ENCODE measurements at regions of chr14 and their contacts with region 1.

Region 1: DNA sequence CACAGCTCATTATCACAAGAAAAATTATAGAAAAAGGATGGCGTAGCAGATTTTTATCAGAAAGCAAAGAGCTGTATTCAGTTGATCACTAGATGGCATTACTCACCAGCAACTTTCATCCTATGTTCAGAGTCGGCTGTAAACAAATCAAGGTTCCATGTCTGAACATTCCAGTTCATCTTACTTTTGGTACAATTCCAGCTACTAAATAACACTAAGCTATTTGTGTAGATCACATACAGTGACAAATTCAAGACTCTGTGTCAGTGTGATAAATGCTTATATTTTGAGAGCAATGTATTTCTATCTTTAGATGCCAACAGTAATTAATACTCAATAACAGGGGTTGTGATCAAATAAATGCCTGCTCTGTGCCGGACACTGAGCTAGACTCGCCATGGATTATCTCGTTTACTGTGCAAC is 30.1 kb downstream of the NRDE2 start:
- DNase-seq: no peak
- H3K4me3 ChIP-seq: no peak overlapping the region
- H3K27ac ChIP-seq: peak overlapping the region; percentile 54 to 77 (median 74)
- H3K4me1 ChIP-seq: peaks cover 10 to 35% (median 32%) of the 10 kb centered on the region in 4 donors
- H3K27me3 ChIP-seq: no peaks in the 10 kb centered on the region
- CTCF ChIP-seq: peak; percentile 67 to 68 (median 67)
- EP300 ChIP-seq: no peak
- POLR2A ChIP-seq: no peak

Region 2: DNA sequence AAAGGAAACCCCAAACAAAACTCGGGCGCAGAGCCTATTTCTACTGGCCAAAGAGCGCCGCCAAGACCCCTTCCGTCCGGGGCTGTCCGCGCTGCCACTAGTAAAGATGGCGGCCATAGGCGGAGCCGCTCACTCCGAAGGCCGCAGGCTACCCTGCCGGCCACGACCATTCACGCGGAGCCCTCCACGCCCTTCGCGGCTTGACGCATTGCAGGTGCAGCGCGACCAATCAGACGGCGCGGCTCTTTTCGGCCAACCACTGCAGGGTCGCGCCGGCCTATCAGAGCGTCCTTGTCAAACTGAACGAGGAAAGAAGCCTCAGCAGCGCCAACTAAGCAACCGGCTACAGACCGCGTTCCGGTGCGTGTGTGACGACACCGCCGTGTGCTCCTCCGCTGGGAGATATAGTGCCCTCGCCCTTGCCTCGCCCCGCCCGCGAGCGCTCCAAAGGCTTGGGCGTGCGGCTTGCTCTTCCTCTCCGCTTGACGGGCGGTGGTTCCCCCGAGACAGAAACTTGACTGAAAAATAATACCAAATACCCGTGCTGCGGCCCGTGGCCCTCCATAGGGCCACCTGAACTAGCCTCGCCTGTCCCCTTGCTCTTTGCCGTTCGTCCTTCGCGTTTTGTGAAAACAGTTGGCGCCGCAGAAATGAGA is 81.5 kb after region 1 on chr14:
- intact Hi-C with region 1: loop called (anchors 2 kb)
- DNase-seq: peak; percentile 100
- H3K4me3 ChIP-seq: peak overlapping the region; percentile 60 to 71 (median 70)
- H3K27ac ChIP-seq: peak overlapping the region; percentile 91 to 99 (median 97)
- H3K4me1 ChIP-seq: peaks cover 19 to 35% (median 33%) of the 10 kb centered on the region in 4 donors
- H3K27me3 ChIP-seq: no peaks in the 10 kb centered on the region
- CTCF ChIP-seq: peak in 2 of 3 experiments; percentile 11 to 14
- EP300 ChIP-seq: no peak
- POLR2A ChIP-seq: peak; percentile 92

Region 3: DNA sequence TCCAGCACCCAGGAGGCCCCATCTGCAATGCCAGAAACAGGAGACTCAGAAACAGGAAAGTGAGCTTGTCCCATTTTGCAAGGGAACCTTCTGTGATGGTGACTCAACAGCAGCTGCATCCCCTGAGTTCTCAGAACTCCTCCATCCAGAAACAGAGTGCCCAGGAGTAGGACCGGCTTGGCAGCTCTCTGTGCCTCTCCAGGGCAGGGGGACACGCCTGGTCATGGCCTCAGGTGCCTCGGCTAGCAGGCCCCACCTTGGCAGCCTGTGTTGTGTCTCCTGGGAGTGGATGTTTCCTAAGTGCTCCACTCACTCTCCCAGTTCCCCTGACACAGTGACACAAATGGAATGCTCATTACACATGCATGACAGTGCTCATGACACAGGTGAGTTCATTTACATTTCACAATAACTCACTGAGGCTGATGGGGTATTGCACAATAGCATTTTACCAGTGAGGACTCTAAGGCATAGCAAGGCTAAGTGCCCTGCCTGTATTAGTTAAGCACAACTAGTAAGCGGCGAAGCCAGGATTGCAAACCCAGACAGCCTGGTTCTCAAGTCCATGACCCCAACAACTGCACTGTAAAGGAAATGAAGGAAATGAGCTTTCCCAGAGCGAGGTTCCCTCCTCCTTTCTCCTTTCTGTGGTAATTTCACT is 142.5 kb after region 1 on chr14:
- intact Hi-C with region 1: no loop called
- DNase-seq: no peak
- H3K4me3 ChIP-seq: no peak overlapping the region
- H3K27ac ChIP-seq: no peak overlapping the region
- H3K4me1 ChIP-seq: peaks cover 0 to 3% (median 0%) of the 10 kb centered on the region in 4 donors
- H3K27me3 ChIP-seq: no peaks in the 10 kb centered on the region
- CTCF ChIP-seq: no peak
- EP300 ChIP-seq: no peak
- POLR2A ChIP-seq: no peak

Region 4: DNA sequence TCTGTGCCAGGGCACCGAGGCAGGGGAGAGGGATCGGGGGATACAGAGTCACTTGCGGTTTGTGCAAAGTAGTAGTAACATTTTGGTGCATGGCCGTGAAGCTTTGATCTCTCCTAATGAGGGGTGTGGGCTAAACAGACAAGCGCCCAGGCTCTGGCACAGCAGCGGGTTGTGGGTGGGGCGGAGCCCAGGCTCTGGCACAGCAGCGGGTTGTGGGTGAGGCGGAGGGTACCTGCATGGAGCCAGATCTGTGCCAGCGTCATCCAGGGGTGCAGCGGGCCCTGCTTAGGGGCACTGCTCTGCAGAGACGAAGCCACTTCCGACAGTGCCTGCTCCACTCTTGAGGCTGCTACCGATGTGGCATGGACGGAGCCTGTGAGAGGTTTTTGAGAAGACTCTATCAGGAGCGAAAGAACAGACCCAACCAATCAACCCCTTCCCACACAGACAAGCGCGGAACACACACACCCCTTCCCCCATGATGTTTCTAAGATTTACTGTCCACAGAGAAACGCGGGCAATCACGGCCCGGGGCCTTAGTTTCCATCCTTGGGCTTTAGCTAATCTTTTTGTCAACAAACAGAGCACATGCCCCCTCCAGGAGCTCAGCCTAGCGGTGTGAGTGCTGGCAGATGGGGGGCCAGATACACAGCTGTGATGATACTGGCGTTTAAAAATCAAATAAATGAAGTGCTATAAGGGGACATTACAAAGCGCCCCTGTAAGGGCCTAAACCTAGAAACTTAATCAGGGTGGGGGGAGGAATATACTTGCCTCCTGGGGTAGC is 291.8 kb after region 1 on chr14:
- intact Hi-C with region 1: loop called (anchors 5 kb)
- DNase-seq: no peak
- H3K4me3 ChIP-seq: no peak overlapping the region
- H3K27ac ChIP-seq: no peak overlapping the region
- H3K4me1 ChIP-seq: peaks cover 0 to under 1% (median 0%) of the 10 kb centered on the region in 4 donors
- H3K27me3 ChIP-seq: no peaks in the 10 kb centered on the region
- CTCF ChIP-seq: no peak
- EP300 ChIP-seq: no peak
- POLR2A ChIP-seq: no peak

Region 5: DNA sequence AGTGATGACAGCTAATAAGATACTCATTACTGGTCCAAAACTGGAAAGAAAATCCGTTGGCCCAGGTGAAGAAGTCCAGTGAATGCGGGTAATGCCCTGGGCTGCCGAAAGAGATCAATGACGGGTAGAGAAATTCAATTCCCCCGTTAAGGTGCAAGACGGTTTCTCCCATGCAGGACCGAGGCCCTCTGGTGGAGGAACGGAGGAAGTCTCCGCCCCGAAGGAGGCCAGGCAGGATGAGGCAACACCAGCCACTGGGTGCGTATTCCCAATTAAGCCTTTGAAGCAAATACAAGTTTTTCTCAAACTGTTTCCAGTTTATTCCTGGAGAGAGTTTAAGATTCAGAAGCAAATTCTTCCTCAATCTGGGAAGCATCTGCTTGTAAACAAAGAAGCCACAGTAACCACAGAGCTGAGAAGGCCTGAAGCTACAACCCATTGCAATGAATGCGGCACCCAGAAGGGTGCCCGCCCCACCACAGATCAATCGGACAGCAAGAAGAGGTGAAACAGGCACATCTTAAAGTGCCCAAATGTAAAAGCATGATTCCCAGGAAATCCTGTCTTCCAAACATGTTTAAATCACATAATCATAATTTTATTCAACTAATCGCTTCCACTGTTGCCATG is 396.0 kb after region 1 on chr14:
- intact Hi-C with region 1: loop called (anchors 2 kb)
- DNase-seq: peak; percentile 96
- H3K4me3 ChIP-seq: peak overlapping the region in 1 of 4 donors; percentile 14
- H3K27ac ChIP-seq: peak overlapping the region; percentile 71 to 86 (median 82)
- H3K4me1 ChIP-seq: peaks cover 32 to 41% (median 34%) of the 10 kb centered on the region in 4 donors
- H3K27me3 ChIP-seq: no peaks in the 10 kb centered on the region
- CTCF ChIP-seq: peak in 2 of 3 experiments; percentile 95 to 97
- EP300 ChIP-seq: no peak
- POLR2A ChIP-seq: no peak

Region 6: GRCh38 chr14:90726656-90727055 is 425.0 kb after region 1 on chr14:
- intact Hi-C with region 1: loop called (anchors 10 kb)
- DNase-seq: peak; percentile 93
- H3K4me3 ChIP-seq: peak overlapping the region in 1 of 4 donors; percentile 9
- H3K27ac ChIP-seq: peak overlapping the region; percentile 32 to 66 (median 56)
- H3K4me1 ChIP-seq: peaks cover 0 to 45% (median 29%) of the 10 kb centered on the region in 4 donors
- H3K27me3 ChIP-seq: no peaks in the 10 kb centered on the region
- CTCF ChIP-seq: peak; percentile 36 to 45 (median 45)
- EP300 ChIP-seq: no peak
- POLR2A ChIP-seq: no peak

Region 7: GRCh38 chr14:90758028-90758889 is 456.6 kb after region 1 on chr14:
- intact Hi-C with region 1: loop called (anchors 5 kb)
- DNase-seq: peak; percentile 96
- H3K4me3 ChIP-seq: peak overlapping the region; percentile 50 to 58 (median 54)
- H3K27ac ChIP-seq: peak overlapping the region; percentile 86 to 94 (median 92)
- H3K4me1 ChIP-seq: peaks cover 22 to 32% (median 24%) of the 10 kb centered on the region in 4 donors
- H3K27me3 ChIP-seq: no peaks in the 10 kb centered on the region
- CTCF ChIP-seq: peak; percentile 92 to 95 (median 92)
- EP300 ChIP-seq: no peak
- POLR2A ChIP-seq: no peak

Region 8: GRCh38 chr14:90815822-90816700 is 514.4 kb after region 1 on chr14 and contains the start of gene TTC7B:
- intact Hi-C with region 1: loop called (anchors 5 kb)
- DNase-seq: no peak
- H3K4me3 ChIP-seq: peak within 1 kb of the TSS; percentile 76 to 90 (median 78)
- H3K27ac ChIP-seq: peak within 1 kb of the TSS in 3 of 4 donors; percentile 64 to 70 (median 68)
- H3K4me1 ChIP-seq: peaks cover 18 to 46% (median 27%) of the 10 kb centered on the region in 4 donors
- H3K27me3 ChIP-seq: no peaks in the 10 kb centered on the region
- CTCF ChIP-seq: peak; percentile 12 to 58 (median 41)
- EP300 ChIP-seq: no peak
- POLR2A ChIP-seq: no peak
- total RNA-seq, gene TTC7B: 54.4 to 148 (median 113) TPM